CD4-positive, alpha-beta memory T cell (primary cell): ENCODE measurements at regions of chr20 and their contacts with region 1.

Region 1: GRCh38 chr20:38805502-38805957 is at the start of gene PPP1R16B:
- DNase-seq: peak; percentile 79 to 84 (median 80)
- H3K4me3 ChIP-seq: peak within 1 kb of the TSS; percentile 76 to 94
- H3K4me3 Mint-ChIP-seq: peak within 1 kb of the TSS; percentile 87 to 94 (median 92)
- H3K27ac ChIP-seq: peak within 1 kb of the TSS; percentile 96
- H3K27ac Mint-ChIP-seq: peak within 1 kb of the TSS; percentile 97 to 100 (median 99)
- H3K4me1 ChIP-seq: peaks cover 59% of the 10 kb centered on the region
- H3K4me1 Mint-ChIP-seq: peaks cover 45 to 58% (median 50%) of the 10 kb centered on the region in 4 donors
- H3K27me3 ChIP-seq: no peaks in the 10 kb centered on the region
- H3K27me3 Mint-ChIP-seq: no peaks in the 10 kb centered on the region
- total RNA-seq, gene PPP1R16B: 54.3 to 55.1 TPM

Region 2: DNA sequence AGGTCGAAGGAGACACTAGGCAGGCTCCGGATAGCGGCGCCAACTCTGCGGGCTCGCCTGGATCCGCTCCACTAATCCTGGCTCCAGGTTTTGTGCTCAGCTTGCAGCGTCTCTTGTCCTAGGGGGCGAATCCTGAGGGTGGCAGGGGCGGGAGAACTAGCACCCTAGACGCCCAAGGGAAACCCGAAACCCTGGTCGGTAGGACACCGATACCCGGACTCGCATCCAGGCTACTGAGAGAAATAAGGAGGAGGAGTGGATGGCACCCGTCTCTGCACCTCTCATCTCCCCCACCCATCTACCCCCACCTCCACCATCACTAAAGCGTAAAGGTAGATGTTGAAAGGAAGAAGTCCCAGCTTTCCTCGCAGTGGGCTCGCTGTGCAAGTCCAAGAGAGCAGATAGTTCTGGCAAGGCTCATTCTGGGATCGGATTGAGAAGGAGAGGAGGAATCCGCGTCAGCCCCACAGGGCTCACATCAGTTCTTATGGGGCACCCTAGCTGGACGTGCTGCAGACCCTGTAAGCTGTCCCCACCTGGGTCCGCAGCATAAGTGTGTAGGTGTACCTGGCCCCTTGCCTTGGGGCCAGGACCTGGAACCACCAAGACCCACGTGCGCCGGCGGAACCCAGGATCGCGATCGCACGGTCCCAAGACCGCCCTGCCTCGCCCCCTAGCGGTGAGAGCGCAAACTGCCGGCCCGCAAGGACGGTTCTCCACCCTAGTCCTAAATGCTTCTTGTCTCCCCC is 74.4 kb before region 1 on chr20:
- CTCF ChIA-PET with region 1: interaction called, 3 read pairs
- POLR2A ChIA-PET with region 1: no interaction called
- intact Hi-C with region 1: loop called (anchors 5 kb)
- DNase-seq: peak; percentile 66 to 74 (median 71)
- H3K4me3 ChIP-seq: peak overlapping the region; percentile 44 to 75
- H3K4me3 Mint-ChIP-seq: peak overlapping the region; percentile 61 to 85 (median 73)
- H3K27ac ChIP-seq: no peak overlapping the region
- H3K27ac Mint-ChIP-seq: peak overlapping the region in 5 of 7 donors; percentile 11 to 94 (median 68)
- H3K4me1 ChIP-seq: peaks cover 46% of the 10 kb centered on the region
- H3K4me1 Mint-ChIP-seq: peaks cover 33 to 52% (median 44%) of the 10 kb centered on the region in 4 donors
- H3K27me3 ChIP-seq: peaks cover 74% of the 10 kb centered on the region
- H3K27me3 Mint-ChIP-seq: peaks cover 67 to 85% of the 10 kb centered on the region in 2 donors

Region 3: GRCh38 chr20:38818113-38819065 is 12.9 kb after region 1 on chr20:
- CTCF ChIA-PET with region 1: interaction called, 15 read pairs
- POLR2A ChIA-PET with region 1: interaction called, 12 read pairs
- intact Hi-C with region 1: no loop called
- DNase-seq: no peak
- H3K4me3 ChIP-seq: no peak overlapping the region
- H3K4me3 Mint-ChIP-seq: peak overlapping the region in 3 of 8 donors; percentile 4 to 32 (median 27)
- H3K27ac ChIP-seq: no peak overlapping the region
- H3K27ac Mint-ChIP-seq: peak overlapping the region in 6 of 7 donors; percentile 55 to 84 (median 77)
- H3K4me1 ChIP-seq: peaks cover 66% of the 10 kb centered on the region
- H3K4me1 Mint-ChIP-seq: peaks cover 50 to 83% (median 70%) of the 10 kb centered on the region in 4 donors
- H3K27me3 ChIP-seq: no peaks in the 10 kb centered on the region
- H3K27me3 Mint-ChIP-seq: no peaks in the 10 kb centered on the region

Region 4: DNA sequence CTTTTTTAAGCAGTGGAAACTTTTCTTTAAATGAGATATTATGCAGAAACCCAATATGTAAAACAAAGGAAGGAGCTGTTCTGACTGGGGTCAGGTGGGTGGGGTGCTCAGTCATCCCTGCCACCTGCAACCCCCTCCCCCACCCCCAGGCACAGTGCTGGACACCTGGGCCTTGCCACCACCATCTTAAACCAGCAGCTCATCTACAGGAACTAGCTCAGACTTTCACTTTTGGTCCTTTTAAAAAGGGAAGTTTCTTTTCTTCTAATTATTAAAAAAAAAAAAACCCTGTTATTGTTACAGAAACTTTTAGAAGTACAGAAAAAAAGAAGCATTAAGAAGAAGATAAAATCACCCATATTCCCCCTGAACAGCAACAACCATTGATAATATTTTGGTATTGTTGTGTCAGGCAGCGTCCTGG is 37.0 kb after region 1 on chr20:
- CTCF ChIA-PET with region 1: interaction called, 21 read pairs
- POLR2A ChIA-PET with region 1: interaction called, 114 read pairs
- intact Hi-C with region 1: loop called (anchors 2 kb)
- DNase-seq: peak; percentile 50 to 67 (median 56)
- H3K4me3 ChIP-seq: no peak overlapping the region
- H3K4me3 Mint-ChIP-seq: peak overlapping the region; percentile 60 to 87 (median 74)
- H3K27ac ChIP-seq: peak overlapping the region; percentile 83
- H3K27ac Mint-ChIP-seq: peak overlapping the region; percentile 96 to 100 (median 99)
- H3K4me1 ChIP-seq: peaks cover 96% of the 10 kb centered on the region
- H3K4me1 Mint-ChIP-seq: peaks cover 67 to 88% (median 77%) of the 10 kb centered on the region in 4 donors
- H3K27me3 ChIP-seq: no peaks in the 10 kb centered on the region
- H3K27me3 Mint-ChIP-seq: no peaks in the 10 kb centered on the region

Region 5: DNA sequence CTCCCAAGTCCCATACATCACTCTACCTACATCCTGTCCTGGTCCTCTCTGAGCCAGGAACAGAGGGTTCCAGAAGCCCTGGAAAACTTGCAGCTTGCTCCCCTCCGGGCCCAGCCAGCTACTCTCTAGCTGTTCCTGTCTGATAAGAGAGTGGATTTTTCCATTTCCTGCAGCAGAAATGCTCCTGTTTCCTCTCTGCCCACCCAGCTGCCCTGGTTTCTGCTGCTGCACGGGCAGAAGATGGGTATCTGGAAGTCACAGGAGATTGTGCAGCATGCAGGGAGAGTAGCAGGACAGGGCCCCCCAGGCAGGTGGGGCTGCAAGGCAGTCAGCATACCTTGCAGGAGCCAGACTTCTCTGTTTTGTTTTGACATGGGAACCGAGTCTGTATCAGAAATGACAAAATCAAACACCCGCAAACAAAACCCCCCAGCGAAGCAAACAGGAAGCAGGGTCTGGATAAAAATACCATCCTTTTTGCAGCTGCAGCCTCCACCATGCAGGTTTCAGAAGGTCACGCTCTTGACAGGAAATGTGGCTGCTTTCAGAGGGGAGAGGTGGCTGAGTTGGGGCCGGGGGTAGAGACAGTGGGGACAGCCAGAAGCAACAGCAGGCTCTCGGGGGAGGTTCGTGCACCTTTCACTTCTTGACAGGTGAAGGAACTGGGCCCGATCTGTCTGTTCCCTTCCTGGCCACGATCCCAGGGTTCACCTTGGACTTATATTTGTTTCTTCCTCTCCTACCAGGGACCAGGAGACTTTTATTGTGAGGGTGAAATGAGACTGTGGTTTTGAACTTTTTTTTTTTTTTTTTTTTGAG is 69.9 kb after region 1 on chr20:
- CTCF ChIA-PET with region 1: interaction called, 66 read pairs
- POLR2A ChIA-PET with region 1: interaction called, 185 read pairs
- intact Hi-C with region 1: loop called (anchors 1 kb)
- DNase-seq: peak; percentile 78 to 85 (median 79)
- H3K4me3 ChIP-seq: peak overlapping the region; percentile 33 to 48
- H3K4me3 Mint-ChIP-seq: peak overlapping the region; percentile 86 to 95 (median 88)
- H3K27ac ChIP-seq: peak overlapping the region; percentile 75
- H3K27ac Mint-ChIP-seq: peak overlapping the region; percentile 97 to 100 (median 99)
- H3K4me1 ChIP-seq: peaks cover 87% of the 10 kb centered on the region
- H3K4me1 Mint-ChIP-seq: peaks cover 69 to 99% (median 84%) of the 10 kb centered on the region in 4 donors
- H3K27me3 ChIP-seq: no peaks in the 10 kb centered on the region
- H3K27me3 Mint-ChIP-seq: no peaks in the 10 kb centered on the region

Region 6: GRCh38 chr20:38893565-38894090 is 88.1 kb after region 1 on chr20:
- CTCF ChIA-PET with region 1: interaction called, 114 read pairs
- POLR2A ChIA-PET with region 1: interaction called, 75 read pairs
- intact Hi-C with region 1: loop called (anchors 1 kb)
- DNase-seq: peak; percentile 74 to 84 (median 79)
- H3K4me3 ChIP-seq: peak overlapping the region in 1 of 2 donors; percentile 25
- H3K4me3 Mint-ChIP-seq: peak overlapping the region; percentile 22 to 75 (median 67)
- H3K27ac ChIP-seq: peak overlapping the region; percentile 64
- H3K27ac Mint-ChIP-seq: peak overlapping the region; percentile 90 to 96 (median 93)
- H3K4me1 ChIP-seq: peaks cover 36% of the 10 kb centered on the region
- H3K4me1 Mint-ChIP-seq: peaks cover 24 to 41% (median 28%) of the 10 kb centered on the region in 4 donors
- H3K27me3 ChIP-seq: no peaks in the 10 kb centered on the region
- H3K27me3 Mint-ChIP-seq: no peaks in the 10 kb centered on the region